ENCODE measurements at regions of chr17 and their contacts with region 1.

Region 1: GRCh38 chr17:68777243-68777855 is 176.2 kb upstream of the FAM20A start:
- DNase-seq: peak; percentile 17 to 75
- ATAC-seq: peak; percentile 67 to 83 (median 76)
- H3K4me3 ChIP-seq: no peak overlapping the region
- H3K27ac ChIP-seq: peak overlapping the region; percentile 41 to 85 (median 70)
- H3K4me1 ChIP-seq: peaks cover 0 to 44% (median 34%) of the 10 kb centered on the region in 9 donors
- H3K27me3 ChIP-seq: no peaks in the 10 kb centered on the region
- CTCF ChIP-seq: peak; percentile 46 to 79 (median 73)

Region 2: DNA sequence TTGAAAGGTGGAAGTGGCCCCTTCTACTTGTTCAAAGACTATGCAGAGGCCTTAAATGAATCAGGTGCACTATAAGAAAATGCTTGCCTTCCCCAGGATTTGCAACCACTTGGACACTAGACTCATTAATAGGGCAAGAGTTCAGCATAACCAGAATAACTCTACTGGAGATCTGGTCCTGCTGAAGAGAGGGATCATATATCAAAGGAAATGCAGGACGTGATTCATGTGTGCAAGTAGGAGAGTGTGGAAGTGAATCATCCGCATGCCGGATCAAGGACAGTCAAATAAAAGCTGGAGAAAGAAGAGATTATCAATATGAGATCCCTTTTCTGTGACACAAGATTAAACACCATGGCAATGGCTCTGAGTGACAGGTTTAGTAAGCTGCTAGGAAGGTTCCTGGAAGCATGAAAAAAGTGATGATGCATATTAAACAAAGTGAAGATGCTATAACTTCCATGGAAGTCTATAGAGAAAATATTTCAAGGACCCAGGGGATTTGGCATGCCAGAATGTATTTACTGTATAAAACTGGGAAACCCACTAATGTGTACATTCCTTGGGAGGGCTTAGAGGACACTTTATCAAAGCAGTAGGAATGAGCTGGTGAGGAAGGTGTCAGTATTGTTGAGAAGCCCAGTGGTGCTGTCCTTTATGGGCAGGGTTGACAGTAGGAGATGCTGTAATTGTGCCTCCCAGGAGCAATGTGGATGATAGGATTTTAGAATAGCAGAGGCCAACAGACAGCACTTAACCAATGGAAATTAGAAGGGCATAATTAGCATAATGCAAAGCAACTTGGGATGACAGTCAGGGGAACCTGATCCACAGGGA is 44.7 kb after region 1 on chr17:
- intact Hi-C with region 1: no loop called
- DNase-seq: no peak
- ATAC-seq: peak in 1 of 8 donors; percentile 80
- H3K4me3 ChIP-seq: no peak overlapping the region
- H3K27ac ChIP-seq: peak overlapping the region in 4 of 10 donors; percentile 15 to 77 (median 34)
- H3K4me1 ChIP-seq: peaks cover 0 to 18% (median 3%) of the 10 kb centered on the region in 9 donors
- H3K27me3 ChIP-seq: no peaks in the 10 kb centered on the region
- CTCF ChIP-seq: no peak

Region 3: GRCh38 chr17:68909066-68909465 is 131.7 kb after region 1 on chr17:
- intact Hi-C with region 1: loop called in 3 of 10 experiments (anchors 5 to 10 kb)
- DNase-seq: peak in 1 of 2 donors; percentile 55
- ATAC-seq: peak; percentile 56 to 87 (median 73)
- H3K4me3 ChIP-seq: no peak overlapping the region
- H3K27ac ChIP-seq: peak overlapping the region; percentile 7 to 82 (median 56)
- H3K4me1 ChIP-seq: peaks cover 0 to 33% (median 12%) of the 10 kb centered on the region in 9 donors
- H3K27me3 ChIP-seq: no peaks in the 10 kb centered on the region
- CTCF ChIP-seq: no peak

Region 4: GRCh38 chr17:68972119-68972704 is 194.9 kb after region 1 on chr17:
- intact Hi-C with region 1: loop called (anchors 2 to 10 kb)
- DNase-seq: no peak
- ATAC-seq: peak in 5 of 8 donors; percentile 49 to 66 (median 56)
- H3K4me3 ChIP-seq: no peak overlapping the region
- H3K27ac ChIP-seq: peak overlapping the region in 3 of 10 donors; percentile 18 to 38 (median 24)
- H3K4me1 ChIP-seq: peaks cover 0 to 6% (median 0%) of the 10 kb centered on the region in 9 donors
- H3K27me3 ChIP-seq: peaks cover 0 to 4% (median 0%) of the 10 kb centered on the region in 7 donors
- CTCF ChIP-seq: peak; percentile 21 to 70 (median 61)

Region 5: GRCh38 chr17:69235338-69235930 is 458.1 kb after region 1 on chr17:
- intact Hi-C with region 1: loop called (anchors 2 to 5 kb)
- DNase-seq: peak; percentile 57 to 86
- ATAC-seq: peak; percentile 85 to 93 (median 88)
- H3K4me3 ChIP-seq: no peak overlapping the region
- H3K27ac ChIP-seq: peak overlapping the region in 2 of 10 donors; percentile 10 to 12
- H3K4me1 ChIP-seq: peaks cover 0 to 5% (median 3%) of the 10 kb centered on the region in 9 donors
- H3K27me3 ChIP-seq: no peaks in the 10 kb centered on the region
- CTCF ChIP-seq: peak; percentile 59 to 85 (median 77)

Measured in heart right ventricle (tissue), 16 donors.